ENCODE measurements at regions of chr2 and their contacts with region 1.

Region 1: DNA sequence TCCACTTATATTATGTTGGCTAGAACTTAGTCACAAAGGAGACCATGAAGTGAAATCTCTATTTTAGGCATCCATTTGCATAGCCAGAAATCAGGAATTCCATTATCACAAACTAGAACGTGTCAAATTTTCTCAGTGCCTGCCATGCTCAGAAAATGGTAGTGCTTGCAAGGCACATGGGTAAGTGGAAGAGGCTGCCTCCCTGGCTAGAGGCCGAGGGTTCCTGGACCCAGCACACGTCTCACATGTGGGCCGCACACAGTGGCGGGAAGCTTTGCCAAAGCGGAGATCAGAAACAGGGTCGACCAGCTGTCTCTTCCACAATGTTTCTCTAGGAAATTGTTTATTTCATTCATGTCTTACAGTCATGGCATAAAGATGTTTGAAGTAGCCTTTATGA is 42.3 kb downstream of the TRAF3IP1 start:
- DNase-seq: no peak
- ATAC-seq: peak in 1 of 8 donors; percentile 31
- H3K4me3 ChIP-seq: no peak overlapping the region
- H3K27ac ChIP-seq: no peak overlapping the region
- H3K4me1 ChIP-seq: peaks cover 0 to 9% (median 0%) of the 10 kb centered on the region in 9 donors
- H3K27me3 ChIP-seq: no peaks in the 10 kb centered on the region
- CTCF ChIP-seq: no peak

Region 2: GRCh38 chr2:238305092-238305862 is 57.3 kb before region 1 on chr2:
- intact Hi-C with region 1: no loop called
- DNase-seq: no peak
- ATAC-seq: peak in 1 of 8 donors; percentile 38
- H3K4me3 ChIP-seq: no peak overlapping the region
- H3K27ac ChIP-seq: no peak overlapping the region
- H3K4me1 ChIP-seq: peaks cover 0 to 4% (median 0%) of the 10 kb centered on the region in 9 donors
- H3K27me3 ChIP-seq: peaks cover 0 to 4% (median 0%) of the 10 kb centered on the region in 7 donors
- CTCF ChIP-seq: peak in 4 of 9 donors; percentile 6 to 27 (median 21)

Region 3: DNA sequence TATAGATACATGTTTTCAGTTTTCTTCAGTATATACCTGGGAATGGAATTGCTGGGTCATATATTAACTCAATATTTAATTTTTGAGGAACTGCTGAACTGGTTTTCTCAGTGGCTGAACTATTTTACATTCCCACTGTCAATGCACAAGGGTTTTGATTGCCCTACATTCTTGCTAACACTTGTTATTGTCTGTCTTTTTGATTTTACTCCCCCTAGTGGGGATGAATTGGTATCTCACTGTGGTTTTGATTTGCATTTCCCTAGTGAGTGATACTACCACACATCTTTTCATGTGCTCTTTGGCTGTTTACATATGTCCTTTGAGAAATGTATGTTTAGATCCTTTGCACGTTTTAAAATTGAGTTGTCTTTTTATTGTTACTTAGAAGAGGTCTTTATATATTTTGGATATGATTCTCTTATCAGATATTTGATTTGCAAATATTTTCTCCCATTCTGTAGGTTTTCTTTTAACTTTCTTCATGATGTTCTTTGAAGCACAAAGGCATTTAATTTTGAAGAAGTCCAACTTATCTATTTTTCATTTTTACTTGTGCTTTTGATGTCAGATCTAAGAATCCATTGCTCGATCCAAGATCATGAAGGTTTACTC is 100.3 kb after region 1 on chr2:
- intact Hi-C with region 1: loop called in 4 of 10 experiments (anchors 5 kb)
- DNase-seq: no peak
- ATAC-seq: no peak
- H3K4me3 ChIP-seq: no peak overlapping the region
- H3K27ac ChIP-seq: no peak overlapping the region
- H3K4me1 ChIP-seq: peaks cover 6 to 22% (median 19%) of the 10 kb centered on the region in 9 donors
- H3K27me3 ChIP-seq: peaks cover 0 to 5% (median 0%) of the 10 kb centered on the region in 7 donors
- CTCF ChIP-seq: peak; percentile 31 to 84 (median 72)

Measured in heart right ventricle (tissue), 16 donors.